Breast epithelium (tissue), 4 donors: ENCODE measurements at regions of chr5 and their contacts with region 1.

Region 1: GRCh38 chr5:149466457-149466972 is 84.7 kb downstream of the CSNK1A1 start:
- DNase-seq: no peak
- H3K4me3 ChIP-seq: no peak overlapping the region
- H3K27ac ChIP-seq: no peak overlapping the region
- H3K4me1 ChIP-seq: peaks cover 0 to 6% of the 10 kb centered on the region in 2 donors
- H3K27me3 ChIP-seq: no peaks in the 10 kb centered on the region
- CTCF ChIP-seq: no peak
- POLR2A ChIP-seq: no peak

Region 2: GRCh38 chr5:150624334-150625163 is 1158.0 kb after region 1 on chr5:
- intact Hi-C with region 1: loop called (anchors 10 kb)
- DNase-seq: no peak
- H3K4me3 ChIP-seq: peak overlapping the region; percentile 67 to 91 (median 74)
- H3K27ac ChIP-seq: peak overlapping the region; percentile 71 to 95
- H3K4me1 ChIP-seq: peaks cover 0 to 3% of the 10 kb centered on the region in 2 donors
- H3K27me3 ChIP-seq: no peaks in the 10 kb centered on the region
- CTCF ChIP-seq: peak in 1 of 3 donors; percentile 9
- POLR2A ChIP-seq: no peak